ENCODE measurements at regions of chr1 and their contacts with region 1.

Region 1: DNA sequence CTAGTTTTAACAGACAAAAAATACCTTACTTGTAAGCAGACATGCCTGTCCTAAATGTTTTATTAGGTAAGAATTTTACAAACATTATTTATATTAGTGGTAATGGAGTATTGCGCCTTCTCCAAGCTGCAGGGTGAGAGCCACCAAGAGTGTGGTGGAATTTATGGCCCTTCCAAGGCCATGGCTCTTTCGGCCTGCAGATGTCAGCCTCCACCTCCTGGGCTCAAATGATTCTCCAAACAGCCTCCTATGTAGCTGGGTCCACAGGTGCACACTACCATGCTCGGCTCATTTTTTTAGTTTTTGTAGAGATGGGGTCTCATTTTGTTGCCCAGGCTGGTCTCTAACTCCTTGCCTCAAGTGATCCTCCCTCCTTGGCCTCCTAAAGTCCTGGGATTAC is 56.3 kb downstream of the ITGB3BP start:
- DNase-seq: no peak
- ATAC-seq: no peak
- H3K4me3 ChIP-seq: no peak overlapping the region
- H3K27ac ChIP-seq: no peak overlapping the region
- H3K4me1 ChIP-seq: peaks cover 0 to 7% (median 0%) of the 10 kb centered on the region in 12 donors
- H3K27me3 ChIP-seq: no peaks in the 10 kb centered on the region
- CTCF ChIP-seq: peak in 3 of 12 donors; percentile 11 to 34 (median 22)
- POLR2A ChIP-seq: no peak

Region 2: DNA sequence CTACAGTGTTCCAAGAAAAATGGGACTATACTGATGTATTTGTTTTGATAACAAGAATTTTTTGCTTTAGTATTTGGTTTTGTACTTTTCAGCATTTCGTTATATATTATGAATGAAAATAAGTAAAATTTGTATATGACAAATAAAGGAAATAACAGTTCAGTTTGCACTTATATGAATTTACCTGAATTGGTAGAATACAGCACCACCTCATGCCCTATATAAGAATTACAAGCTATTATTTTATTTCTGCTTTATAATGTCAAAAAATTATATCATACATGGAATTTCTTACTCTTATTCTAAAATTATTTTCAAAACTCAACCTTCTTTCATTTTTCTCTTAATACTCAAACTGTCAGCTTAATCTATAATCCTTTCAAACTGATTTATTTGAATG is 71.2 kb after region 1 on chr1:
- intact Hi-C with region 1: loop called in 1 of 10 experiments (anchors 5 kb)
- DNase-seq: no peak
- ATAC-seq: no peak
- H3K4me3 ChIP-seq: no peak overlapping the region
- H3K27ac ChIP-seq: no peak overlapping the region
- H3K4me1 ChIP-seq: no peaks in the 10 kb centered on the region
- H3K27me3 ChIP-seq: no peaks in the 10 kb centered on the region
- CTCF ChIP-seq: peak; percentile 9 to 53 (median 34)
- POLR2A ChIP-seq: no peak

Measured in heart left ventricle (tissue), 16 donors.